Dorsolateral prefrontal cortex (tissue), 120 donors: ENCODE measurements at regions of chr1 and their contacts with region 1.

Region 1: GRCh38 chr1:8660411-8660828 is 157.0 kb downstream of the RERE start:
- DNase-seq: peak; percentile 40 to 85 (median 74)
- H3K4me3 ChIP-seq: peak overlapping the region in 12 of 59 donors; percentile 1 to 34 (median 12)
- H3K27ac ChIP-seq: peak overlapping the region in 57 of 59 donors; percentile 13 to 88 (median 73)
- H3K27me3 ChIP-seq: no peaks in the 10 kb centered on the region
- CTCF ChIP-seq: no peak

Region 2: GRCh38 chr1:8702850-8703810 is 42.7 kb after region 1 on chr1:
- intact Hi-C with region 1: loop called in 1 of 2 experiments (anchors 2 kb)
- DNase-seq: peak; percentile 85 to 93 (median 90)
- H3K4me3 ChIP-seq: peak overlapping the region; percentile 47 to 82 (median 67)
- H3K27ac ChIP-seq: peak overlapping the region; percentile 8 to 94 (median 83)
- H3K27me3 ChIP-seq: no peaks in the 10 kb centered on the region
- CTCF ChIP-seq: peak in 47 of 56 donors; percentile 8 to 61 (median 34)